ENCODE measurements at regions of chr2 and their contacts with region 1.

Region 1: DNA sequence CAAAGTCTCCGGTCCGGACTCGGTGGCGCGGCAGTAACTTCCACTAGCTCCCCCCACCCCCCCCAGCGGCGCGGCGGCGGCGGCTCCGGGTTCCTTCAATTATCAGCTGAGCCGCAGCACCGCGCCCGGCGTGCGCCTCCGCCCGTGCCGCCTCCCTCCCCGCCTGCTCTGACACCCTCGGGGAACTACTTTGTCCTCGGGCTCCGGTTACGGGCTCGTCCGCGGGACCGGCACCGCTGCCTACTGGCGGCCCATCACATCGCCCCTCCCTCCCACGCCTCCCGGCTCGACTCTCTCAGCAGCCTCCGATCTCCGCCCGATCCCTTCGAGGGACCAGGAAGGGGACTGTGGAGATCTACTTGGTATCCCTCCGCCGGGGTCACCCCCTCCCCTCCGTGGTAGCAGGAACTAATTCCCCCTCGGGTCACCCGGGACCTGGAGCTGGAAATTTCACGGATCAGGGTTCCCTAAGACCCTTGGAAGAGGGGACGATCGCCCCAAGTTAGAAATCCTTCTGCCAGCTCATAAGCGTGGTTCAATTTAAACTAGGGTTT is at the start of gene TRIP12:
- DNase-seq: peak; percentile 77 to 96
- H3K4me3 ChIP-seq: peak within 1 kb of the TSS; percentile 95 to 98
- H3K27ac ChIP-seq: peak within 1 kb of the TSS; percentile 99
- H3K4me1 ChIP-seq: peaks cover 0 to 10% of the 10 kb centered on the region in 2 donors
- H3K27me3 ChIP-seq: no peaks in the 10 kb centered on the region
- CTCF ChIP-seq: no peak
- total RNA-seq, gene TRIP12: 79.4 TPM

Region 2: GRCh38 chr2:229800997-229801754 is 120.8 kb before region 1 on chr2:
- intact Hi-C with region 1: loop called (anchors 2 kb)
- DNase-seq: peak in 1 of 2 donors; percentile 78
- H3K4me3 ChIP-seq: no peak overlapping the region
- H3K27ac ChIP-seq: peak overlapping the region in 1 of 2 donors; percentile 1
- H3K4me1 ChIP-seq: peaks cover 3 to 28% of the 10 kb centered on the region in 2 donors
- H3K27me3 ChIP-seq: no peaks in the 10 kb centered on the region
- CTCF ChIP-seq: peak; percentile 45 to 75 (median 72)

Region 3: GRCh38 chr2:230053753-230054478 is 131.9 kb after region 1 on chr2:
- intact Hi-C with region 1: no loop called
- DNase-seq: no peak
- H3K4me3 ChIP-seq: no peak overlapping the region
- H3K27ac ChIP-seq: no peak overlapping the region
- H3K4me1 ChIP-seq: no peaks in the 10 kb centered on the region
- H3K27me3 ChIP-seq: no peaks in the 10 kb centered on the region
- CTCF ChIP-seq: no peak

Region 4: DNA sequence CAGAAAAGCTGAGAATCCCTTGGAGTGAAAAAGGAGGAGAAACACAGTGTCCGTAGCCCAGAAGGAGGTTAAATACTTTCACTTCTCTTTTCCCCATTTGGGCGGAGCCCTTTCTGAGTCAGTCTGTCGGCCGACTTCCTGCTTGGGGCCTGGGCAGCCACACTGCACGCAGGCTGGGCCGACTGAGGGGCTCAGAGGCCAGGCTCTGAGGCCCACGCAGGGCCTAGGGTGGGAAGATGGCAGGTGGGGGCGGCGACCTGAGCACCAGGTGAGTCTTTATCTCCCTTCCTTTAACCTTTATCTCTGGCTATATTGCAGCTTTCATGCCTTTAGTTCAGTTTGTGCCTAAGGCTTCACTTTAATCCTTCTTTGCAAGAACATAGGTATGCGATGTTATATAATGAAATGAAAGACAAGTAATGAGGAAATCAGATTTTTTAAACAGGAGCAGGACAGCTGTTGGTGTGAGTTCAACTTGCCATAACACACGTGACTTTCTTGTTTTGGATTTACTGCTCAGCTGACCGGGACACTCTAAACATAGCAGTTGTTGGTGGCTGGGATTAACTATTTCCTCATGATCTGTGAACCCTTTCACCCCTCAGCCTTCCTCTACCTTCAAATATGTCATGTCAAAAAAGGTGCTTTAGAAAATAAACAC is 494.2 kb after region 1 on chr2 and contains the start of gene SP100:
- intact Hi-C with region 1: loop called (anchors 5 kb)
- DNase-seq: peak; percentile 33 to 91
- H3K4me3 ChIP-seq: peak within 1 kb of the TSS; percentile 69 to 83
- H3K27ac ChIP-seq: peak within 1 kb of the TSS; percentile 89 to 95
- H3K4me1 ChIP-seq: peaks cover 2 to 39% of the 10 kb centered on the region in 2 donors
- H3K27me3 ChIP-seq: no peaks in the 10 kb centered on the region
- CTCF ChIP-seq: no peak
- total RNA-seq, gene SP100: 82.0 TPM

Region 5: DNA sequence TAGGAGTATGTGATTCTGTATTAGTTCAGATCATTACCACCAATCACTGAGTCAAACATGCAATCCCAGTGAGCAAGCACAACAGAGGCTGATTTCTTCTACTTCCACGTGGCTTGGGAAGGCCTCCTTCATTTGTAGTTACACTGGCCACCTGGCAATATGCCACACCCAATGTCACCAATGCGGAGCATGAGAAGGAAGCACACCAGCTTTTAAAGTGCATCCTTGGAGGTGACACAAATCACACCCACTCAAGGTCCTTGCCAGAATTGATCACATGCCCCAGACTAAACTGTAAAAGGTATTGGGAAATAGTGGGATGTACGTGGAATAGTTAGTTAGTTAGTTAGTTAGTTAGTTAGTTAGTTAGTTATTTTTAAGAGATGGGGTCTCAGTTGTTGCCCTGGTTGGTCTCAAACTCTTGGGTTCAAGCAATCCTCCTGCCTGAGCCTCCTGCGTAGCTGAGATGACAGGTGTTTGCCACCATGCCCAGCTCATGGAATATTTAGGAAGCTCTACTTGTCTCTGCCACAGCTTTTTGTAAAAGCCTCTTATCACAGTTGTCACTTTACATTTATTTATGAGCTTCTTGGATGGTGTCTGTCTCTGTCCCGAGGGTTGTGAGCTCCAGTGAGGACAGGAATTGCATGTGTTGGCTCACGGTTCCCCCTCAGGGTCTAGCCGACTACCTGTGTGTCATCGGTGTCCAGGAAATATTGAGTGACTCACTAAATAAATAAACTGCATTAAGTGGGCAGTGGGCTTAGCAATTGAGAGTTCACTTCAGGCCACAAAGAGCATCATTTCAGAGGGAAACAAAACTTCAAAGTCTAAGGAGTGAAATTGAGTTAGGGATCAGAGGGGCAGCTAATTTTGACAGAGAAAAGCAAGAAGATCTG is 762.5 kb after region 1 on chr2:
- intact Hi-C with region 1: no loop called
- DNase-seq: no peak
- H3K4me3 ChIP-seq: no peak overlapping the region
- H3K27ac ChIP-seq: no peak overlapping the region
- H3K4me1 ChIP-seq: no peaks in the 10 kb centered on the region
- H3K27me3 ChIP-seq: no peaks in the 10 kb centered on the region
- CTCF ChIP-seq: no peak

Region 6: DNA sequence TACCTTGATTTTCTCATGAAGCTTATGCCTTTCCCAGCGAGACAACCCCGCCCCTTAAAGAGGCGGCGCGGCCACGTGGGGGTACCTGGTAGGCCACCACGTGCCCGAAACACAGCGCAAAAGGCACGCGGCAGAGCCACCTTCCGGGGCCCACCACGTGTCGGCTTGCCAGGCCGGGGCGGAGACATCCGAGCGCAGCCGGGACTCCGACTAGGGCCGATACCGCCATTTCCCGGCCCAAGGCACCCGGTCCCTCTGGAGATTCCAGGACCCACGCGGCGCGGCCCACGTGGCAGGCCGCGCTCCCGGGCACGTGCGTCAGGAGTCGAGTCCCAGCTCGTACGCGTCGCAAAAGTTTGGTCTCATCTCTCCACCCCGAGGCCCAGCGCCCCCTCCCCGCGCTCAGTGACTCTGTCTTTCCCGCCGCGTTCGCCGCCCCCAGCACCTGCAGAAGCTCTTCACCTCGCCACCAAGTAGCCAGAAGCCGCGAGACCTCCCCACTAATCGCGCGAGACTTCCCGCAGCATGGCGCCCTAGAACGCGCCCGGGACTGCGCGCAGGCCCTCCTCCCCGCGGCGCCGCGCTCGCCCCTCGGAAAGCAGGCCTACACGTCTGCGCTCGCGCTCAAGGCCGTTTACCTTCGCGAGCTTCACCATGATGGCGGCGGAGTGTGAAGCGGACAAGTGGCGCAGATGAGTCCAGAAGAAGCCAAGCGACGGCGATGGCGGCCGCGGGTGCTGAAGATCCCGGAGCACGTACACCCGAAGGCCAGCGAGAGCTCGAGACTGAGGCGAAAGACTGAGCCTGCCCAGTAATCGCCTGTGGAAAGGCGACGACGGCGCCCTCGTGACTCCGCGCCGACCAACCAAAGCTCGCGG is 1542.0 kb after region 1 on chr2 and contains the start of gene NCL:
- intact Hi-C with region 1: loop called (anchors 2 kb)
- DNase-seq: peak; percentile 35 to 88
- H3K4me3 ChIP-seq: peak within 1 kb of the TSS; percentile 78 to 79
- H3K27ac ChIP-seq: peak within 1 kb of the TSS; percentile 97 to 98
- H3K4me1 ChIP-seq: peaks cover 6 to 16% of the 10 kb centered on the region in 2 donors
- H3K27me3 ChIP-seq: no peaks in the 10 kb centered on the region
- CTCF ChIP-seq: no peak
- total RNA-seq, gene NCL: 136 TPM